Caco-2 (cell line): ENCODE measurements at regions of chr16 and their contacts with region 1.

Region 1: GRCh38 chr16:20383106-20384029 is 21.2 kb downstream of the PDILT start:
- DNase-seq: peak; percentile 71 to 74
- H3K4me3 ChIP-seq: no peak overlapping the region
- H3K4me3 Mint-ChIP-seq: no peak overlapping the region
- H3K27ac Mint-ChIP-seq: no peak overlapping the region
- H3K4me1 ChIP-seq: no peaks in the 10 kb centered on the region
- H3K4me1 Mint-ChIP-seq: no peaks in the 10 kb centered on the region
- H3K27me3 ChIP-seq: no peaks in the 10 kb centered on the region
- H3K27me3 Mint-ChIP-seq: peaks cover 5% of the 10 kb centered on the region
- CTCF ChIP-seq: peak; percentile 62 to 80

Region 2: GRCh38 chr16:19601083-19601976 is 782.0 kb before region 1 on chr16:
- CTCF ChIA-PET with region 1: no interaction called
- POLR2A ChIA-PET with region 1: no interaction called
- intact Hi-C with region 1: loop called (anchors 10 kb)
- DNase-seq: peak in 1 of 2 experiments; percentile 50
- H3K4me3 ChIP-seq: no peak overlapping the region
- H3K4me3 Mint-ChIP-seq: no peak overlapping the region
- H3K27ac Mint-ChIP-seq: no peak overlapping the region
- H3K4me1 ChIP-seq: peaks cover 6% of the 10 kb centered on the region; the same call in 1 of the 2 replicates
- H3K4me1 Mint-ChIP-seq: no peaks in the 10 kb centered on the region
- H3K27me3 ChIP-seq: no peaks in the 10 kb centered on the region
- H3K27me3 Mint-ChIP-seq: no peaks in the 10 kb centered on the region
- CTCF ChIP-seq: peak; percentile 52 to 77

Region 3: DNA sequence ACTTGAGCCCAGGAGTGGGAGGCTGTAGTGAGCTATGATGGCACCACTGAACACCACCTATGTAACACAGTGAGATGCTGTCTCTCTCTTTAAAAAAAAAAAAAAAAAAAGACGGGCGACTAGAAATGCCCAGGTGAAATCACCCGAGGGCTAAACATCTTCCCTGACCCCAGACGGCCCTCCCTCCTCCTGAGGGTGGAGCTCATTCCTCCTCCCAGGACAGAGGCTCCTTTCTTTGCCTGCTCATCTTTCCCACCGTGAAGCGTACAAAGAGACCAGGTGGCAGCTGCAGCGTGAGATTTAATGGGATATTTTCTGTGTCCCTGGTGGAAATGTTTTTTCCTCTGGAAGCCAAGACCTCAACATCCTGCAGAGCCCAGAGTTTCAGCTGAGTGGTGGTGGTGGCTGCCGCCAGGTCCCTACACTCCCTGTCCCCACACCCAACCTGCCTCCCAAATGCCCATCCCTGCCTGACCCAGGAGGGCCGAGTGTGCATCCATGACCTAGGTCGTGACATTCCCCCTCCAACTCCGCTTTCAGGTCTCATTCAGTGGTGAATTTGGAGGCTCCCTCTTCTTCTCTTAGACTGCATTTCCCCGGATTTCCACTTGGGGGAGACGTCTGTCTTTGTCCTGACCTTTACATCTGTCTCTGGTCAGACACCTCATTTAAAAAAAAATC is 484.3 kb before region 1 on chr16:
- CTCF ChIA-PET with region 1: interaction called, 7 read pairs
- POLR2A ChIA-PET with region 1: no interaction called
- intact Hi-C with region 1: loop called (anchors 2 kb)
- DNase-seq: peak; percentile 57 to 70
- H3K4me3 ChIP-seq: no peak overlapping the region
- H3K4me3 Mint-ChIP-seq: no peak overlapping the region
- H3K27ac Mint-ChIP-seq: no peak overlapping the region
- H3K4me1 ChIP-seq: no peaks in the 10 kb centered on the region
- H3K4me1 Mint-ChIP-seq: peaks cover 7% of the 10 kb centered on the region
- H3K27me3 ChIP-seq: no peaks in the 10 kb centered on the region
- H3K27me3 Mint-ChIP-seq: peaks cover 9% of the 10 kb centered on the region
- CTCF ChIP-seq: peak; percentile 60 to 75

Region 4: GRCh38 chr16:19907161-19907992 is 476.0 kb before region 1 on chr16:
- CTCF ChIA-PET with region 1: interaction called, 42 read pairs
- POLR2A ChIA-PET with region 1: no interaction called
- intact Hi-C with region 1: loop called (anchors 1 kb)
- DNase-seq: peak; percentile 50 to 75
- H3K4me3 ChIP-seq: no peak overlapping the region
- H3K4me3 Mint-ChIP-seq: no peak overlapping the region
- H3K27ac Mint-ChIP-seq: no peak overlapping the region
- H3K4me1 ChIP-seq: no peaks in the 10 kb centered on the region
- H3K4me1 Mint-ChIP-seq: peaks cover 7% of the 10 kb centered on the region
- H3K27me3 ChIP-seq: no peaks in the 10 kb centered on the region
- H3K27me3 Mint-ChIP-seq: peaks cover 9% of the 10 kb centered on the region
- CTCF ChIP-seq: peak; percentile 88 to 97

Region 5: DNA sequence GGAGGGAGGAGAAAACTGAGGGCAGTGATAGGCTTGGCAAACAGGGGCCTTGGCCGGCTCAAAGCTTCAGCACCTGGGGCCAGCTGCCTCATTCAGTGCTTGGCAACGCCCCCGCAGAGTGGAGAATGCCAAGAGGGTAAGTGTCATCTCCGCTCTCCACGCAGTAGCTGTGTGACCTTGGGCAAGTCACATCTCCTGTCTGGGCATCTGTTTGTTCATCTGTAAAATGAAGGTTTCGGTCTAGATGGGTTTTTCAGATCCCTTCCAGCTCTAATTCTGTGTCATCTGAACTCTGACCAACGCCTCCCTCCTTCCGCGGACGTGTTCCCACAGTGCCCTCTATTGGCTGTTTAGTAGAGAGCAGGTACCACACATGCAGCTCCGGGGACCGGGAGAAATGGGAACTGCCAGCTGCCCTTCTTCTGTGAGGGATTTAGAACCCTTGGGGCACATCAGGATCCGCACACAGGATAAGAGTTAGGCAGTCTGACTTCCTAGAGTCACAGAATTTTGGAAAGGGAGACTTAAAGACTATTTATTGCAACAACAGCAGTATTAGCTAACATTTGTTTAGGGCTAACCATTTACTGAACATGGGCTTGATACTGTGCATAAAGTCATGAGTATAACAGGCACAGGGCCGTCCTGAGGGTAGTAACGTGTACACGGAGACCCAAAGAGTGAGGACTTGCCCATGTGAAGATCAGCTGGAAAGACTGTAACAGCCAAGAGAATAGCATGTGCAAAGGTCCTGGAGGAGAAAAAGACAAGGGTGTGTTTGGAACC is 82.9 kb before region 1 on chr16:
- CTCF ChIA-PET with region 1: interaction called, 5 read pairs
- POLR2A ChIA-PET with region 1: no interaction called
- intact Hi-C with region 1: loop called (anchors 1 kb)
- DNase-seq: peak; percentile 45 to 61
- H3K4me3 ChIP-seq: no peak overlapping the region
- H3K4me3 Mint-ChIP-seq: no peak overlapping the region
- H3K27ac Mint-ChIP-seq: no peak overlapping the region
- H3K4me1 ChIP-seq: no peaks in the 10 kb centered on the region
- H3K4me1 Mint-ChIP-seq: no peaks in the 10 kb centered on the region
- H3K27me3 ChIP-seq: no peaks in the 10 kb centered on the region
- H3K27me3 Mint-ChIP-seq: peaks cover 21% of the 10 kb centered on the region
- CTCF ChIP-seq: peak; percentile 70 to 79

Region 6: DNA sequence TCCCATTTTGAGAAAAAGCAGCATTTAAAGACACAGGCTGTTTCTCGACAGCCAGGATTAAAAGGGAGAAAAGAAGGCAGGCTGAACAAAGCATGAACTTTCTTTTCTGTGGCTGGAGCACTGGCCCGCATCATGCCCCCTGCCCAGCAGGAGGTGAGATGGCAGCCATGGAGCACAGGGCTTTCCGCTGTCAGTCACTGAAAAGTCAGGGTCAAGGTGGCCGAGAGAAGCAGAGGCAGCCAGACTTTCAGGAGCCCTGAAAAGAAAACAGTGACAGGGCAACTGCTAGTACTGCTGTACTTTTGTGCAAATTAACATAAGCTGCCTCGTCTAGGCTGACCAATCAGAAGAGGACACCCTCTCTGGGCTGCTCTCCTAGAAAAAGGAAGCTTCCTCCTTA is 50.2 kb before region 1 on chr16:
- CTCF ChIA-PET with region 1: interaction called, 11 read pairs
- POLR2A ChIA-PET with region 1: no interaction called
- intact Hi-C with region 1: no loop called
- DNase-seq: no peak
- H3K4me3 ChIP-seq: no peak overlapping the region
- H3K4me3 Mint-ChIP-seq: no peak overlapping the region
- H3K27ac Mint-ChIP-seq: no peak overlapping the region
- H3K4me1 ChIP-seq: no peaks in the 10 kb centered on the region
- H3K4me1 Mint-ChIP-seq: no peaks in the 10 kb centered on the region
- H3K27me3 ChIP-seq: no peaks in the 10 kb centered on the region
- H3K27me3 Mint-ChIP-seq: peaks cover 6% of the 10 kb centered on the region
- CTCF ChIP-seq: no peak

Region 7: DNA sequence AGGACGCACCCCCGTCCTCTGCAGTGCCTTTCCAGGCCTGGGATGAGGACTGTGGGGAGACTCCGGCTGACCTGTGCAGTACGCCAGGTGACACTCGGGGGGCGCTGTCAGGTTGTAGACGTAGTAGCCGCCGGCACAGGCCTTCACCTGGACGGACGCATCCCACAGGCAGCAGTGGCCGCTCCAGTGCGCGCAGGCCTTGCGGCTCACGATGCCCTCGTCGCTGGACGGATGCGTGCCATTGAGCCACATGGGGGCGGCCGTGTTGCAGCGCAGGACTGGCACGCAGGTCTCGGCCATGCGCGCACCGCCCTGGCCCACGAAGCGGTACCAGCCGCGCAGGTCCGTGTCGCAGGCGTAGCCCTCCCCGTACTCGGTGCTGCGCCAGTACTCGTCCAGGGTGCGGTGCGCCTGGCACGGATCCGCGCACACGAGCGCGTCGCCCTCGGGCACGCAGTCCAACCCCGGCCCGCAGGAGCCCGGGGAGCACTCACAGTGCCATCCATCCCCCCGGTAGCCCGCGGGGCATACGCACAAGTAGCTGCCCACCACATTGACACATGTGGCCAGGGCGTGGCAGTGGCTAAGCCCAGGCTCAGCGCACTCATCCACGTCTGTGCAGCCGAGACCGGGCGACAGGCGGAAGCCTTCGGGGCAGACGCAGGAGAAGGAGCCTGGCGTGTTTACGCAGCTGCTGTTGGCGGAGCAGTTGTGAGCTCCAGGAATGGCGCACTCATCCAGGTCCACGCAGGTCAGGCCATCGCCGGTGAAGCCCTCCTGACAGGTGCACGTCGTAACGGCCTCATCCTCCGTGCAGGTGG is 34.8 kb before region 1 on chr16:
- CTCF ChIA-PET with region 1: no interaction called
- POLR2A ChIA-PET with region 1: no interaction called
- intact Hi-C with region 1: no loop called
- DNase-seq: no peak
- H3K4me3 ChIP-seq: no peak overlapping the region
- H3K4me3 Mint-ChIP-seq: no peak overlapping the region
- H3K27ac Mint-ChIP-seq: no peak overlapping the region
- H3K4me1 ChIP-seq: no peaks in the 10 kb centered on the region
- H3K4me1 Mint-ChIP-seq: no peaks in the 10 kb centered on the region
- H3K27me3 ChIP-seq: no peaks in the 10 kb centered on the region
- H3K27me3 Mint-ChIP-seq: peaks cover 7% of the 10 kb centered on the region
- CTCF ChIP-seq: no peak

Region 8: GRCh38 chr16:20441191-20441590 is 57.8 kb after region 1 on chr16:
- CTCF ChIA-PET with region 1: no interaction called
- POLR2A ChIA-PET with region 1: no interaction called
- intact Hi-C with region 1: no loop called
- DNase-seq: no peak
- H3K4me3 ChIP-seq: no peak overlapping the region
- H3K4me3 Mint-ChIP-seq: no peak overlapping the region
- H3K27ac Mint-ChIP-seq: no peak overlapping the region
- H3K4me1 ChIP-seq: no peaks in the 10 kb centered on the region
- H3K4me1 Mint-ChIP-seq: no peaks in the 10 kb centered on the region
- H3K27me3 ChIP-seq: no peaks in the 10 kb centered on the region
- H3K27me3 Mint-ChIP-seq: no peaks in the 10 kb centered on the region
- CTCF ChIP-seq: no peak

Region 9: GRCh38 chr16:20695024-20695423 is 311.7 kb after region 1 on chr16:
- CTCF ChIA-PET with region 1: interaction called, 3 read pairs
- POLR2A ChIA-PET with region 1: no interaction called
- intact Hi-C with region 1: loop called (anchors 10 kb)
- DNase-seq: no peak
- H3K4me3 ChIP-seq: no peak overlapping the region
- H3K4me3 Mint-ChIP-seq: no peak overlapping the region
- H3K27ac Mint-ChIP-seq: no peak overlapping the region
- H3K4me1 ChIP-seq: no peaks in the 10 kb centered on the region
- H3K4me1 Mint-ChIP-seq: no peaks in the 10 kb centered on the region
- H3K27me3 ChIP-seq: no peaks in the 10 kb centered on the region
- H3K27me3 Mint-ChIP-seq: peaks cover under 1% of the 10 kb centered on the region
- CTCF ChIP-seq: no peak